Activated CD4-positive, alpha-beta T cell treated with anti-CD3 and anti-CD28 coated beads for 36 hours (primary cell): ENCODE measurements at regions of chr17 and their contacts with region 1.

Region 1: DNA sequence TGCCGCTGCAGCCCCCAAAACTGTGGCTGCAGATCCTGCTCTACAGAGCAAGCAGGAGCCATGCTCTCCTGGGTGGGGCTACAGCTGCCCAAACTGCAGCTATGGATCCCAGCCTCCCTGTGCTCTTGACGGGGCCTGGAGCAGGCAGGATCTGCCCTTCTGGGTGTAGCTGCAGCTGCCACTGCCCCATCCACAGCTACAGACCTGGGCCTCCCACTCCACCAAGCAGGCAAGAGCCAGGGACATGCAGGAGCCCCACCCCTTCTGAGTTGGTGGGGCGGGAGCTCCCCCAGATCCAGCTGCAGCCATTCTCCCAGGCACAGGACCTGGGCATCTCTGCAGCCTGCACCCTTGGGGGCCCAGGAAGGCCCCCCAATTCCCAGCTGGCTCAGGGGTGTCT is 551.2 kb upstream of the CA10 start:
- DNase-seq: no peak
- ATAC-seq: no peak
- H3K4me3 Mint-ChIP-seq: no peak overlapping the region
- H3K27ac Mint-ChIP-seq: no peak overlapping the region
- H3K4me1 Mint-ChIP-seq: no peaks in the 10 kb centered on the region
- H3K27me3 Mint-ChIP-seq: no peaks in the 10 kb centered on the region

Region 2: GRCh38 chr17:52754838-52755237 is 45.1 kb after region 1 on chr17:
- CTCF ChIA-PET with region 1: no interaction called
- POLR2A ChIA-PET with region 1: no interaction called
- intact Hi-C with region 1: loop called in 1 of 2 experiments (anchors 5 kb)
- DNase-seq: no peak
- ATAC-seq: no peak
- H3K4me3 Mint-ChIP-seq: no peak overlapping the region
- H3K27ac Mint-ChIP-seq: no peak overlapping the region
- H3K4me1 Mint-ChIP-seq: no peaks in the 10 kb centered on the region
- H3K27me3 Mint-ChIP-seq: no peaks in the 10 kb centered on the region